Gastrocnemius medialis (tissue), 4 donors: ENCODE measurements at regions of chr3 and their contacts with region 1.

Region 1: GRCh38 chr3:58188173-58188564 is 22.6 kb downstream of the DNASE1L3 start:
- DNase-seq: no peak
- ATAC-seq: no peak
- H3K4me3 ChIP-seq: no peak overlapping the region
- H3K27ac ChIP-seq: peak overlapping the region in 3 of 4 donors; percentile 38 to 62 (median 60)
- H3K4me1 ChIP-seq: peaks cover 2 to 12% of the 10 kb centered on the region in 2 donors
- H3K27me3 ChIP-seq: no peaks in the 10 kb centered on the region
- CTCF ChIP-seq: no peak
- POLR2A ChIP-seq: no peak

Region 2: DNA sequence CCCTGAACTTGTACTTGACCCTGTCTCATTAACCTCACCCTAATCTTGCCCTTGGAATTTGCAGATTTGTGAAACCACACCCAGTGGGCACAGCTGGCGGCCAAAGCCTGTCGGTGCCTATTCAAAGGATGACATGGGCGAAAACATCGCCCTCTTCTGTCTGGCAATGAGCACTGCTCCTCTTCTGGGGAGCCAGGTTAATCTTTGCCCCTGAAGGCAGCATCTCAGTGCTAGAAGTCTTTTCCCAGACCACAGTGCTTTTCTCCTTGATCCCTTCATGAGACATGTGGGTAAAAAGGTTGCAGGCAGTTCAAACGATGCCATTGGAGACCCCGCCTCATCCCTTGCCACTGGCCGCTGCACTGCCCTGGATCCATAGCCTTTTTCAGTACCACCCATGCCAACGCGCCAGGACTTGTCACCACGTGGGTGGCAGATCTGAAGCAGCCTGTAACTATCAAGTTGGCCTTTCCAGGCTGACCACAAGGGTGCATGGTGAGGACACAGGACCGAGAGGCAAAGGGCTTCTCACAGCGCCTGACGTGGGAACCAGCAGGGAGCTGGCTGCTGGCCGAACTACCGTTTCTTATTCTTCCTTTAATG is 29.1 kb after region 1 on chr3:
- in situ Hi-C with region 1: no loop called
- intact Hi-C with region 1: loop called (anchors 2 kb)
- DNase-seq: peak; percentile 40 to 46
- ATAC-seq: peak; percentile 83 to 84
- H3K4me3 ChIP-seq: no peak overlapping the region
- H3K27ac ChIP-seq: peak overlapping the region in 3 of 4 donors; percentile 14 to 47 (median 30)
- H3K4me1 ChIP-seq: peaks cover 5 to 10% of the 10 kb centered on the region in 2 donors
- H3K27me3 ChIP-seq: no peaks in the 10 kb centered on the region
- CTCF ChIP-seq: peak; percentile 42 to 71 (median 63)
- POLR2A ChIP-seq: no peak

Region 3: DNA sequence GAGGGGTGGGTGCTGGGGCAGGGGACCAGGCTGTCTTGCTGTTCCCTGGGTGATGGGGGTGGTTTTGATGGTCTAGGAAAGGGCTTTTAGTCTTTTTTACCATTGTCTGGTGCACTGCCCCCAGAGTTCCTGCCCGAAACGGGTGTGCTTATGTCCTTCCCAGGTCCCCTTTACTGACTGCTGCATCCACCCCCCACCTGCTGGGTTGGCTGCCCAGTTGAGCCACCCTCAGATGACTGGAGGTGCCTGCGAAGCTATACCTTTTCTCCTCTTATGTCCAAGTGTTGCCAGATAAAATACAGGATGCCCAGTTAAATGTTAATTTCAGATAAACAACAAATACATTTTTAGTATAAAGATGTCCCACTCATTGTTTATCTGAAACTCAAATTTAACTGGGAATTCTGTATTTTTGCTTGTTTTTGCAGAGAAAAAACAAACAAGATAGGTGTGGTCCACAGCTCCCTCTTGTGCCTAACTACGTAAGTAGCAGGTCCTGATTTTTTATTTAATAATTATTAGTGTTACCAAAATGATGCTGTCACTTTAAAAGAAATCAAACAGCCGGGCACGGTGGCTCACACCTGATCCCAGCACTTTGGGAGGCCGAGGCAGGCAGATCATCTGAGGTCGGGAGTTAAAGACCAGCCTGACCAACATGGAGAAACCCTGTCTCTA is 111.8 kb after region 1 on chr3:
- in situ Hi-C with region 1: loop called (anchors 5 to 10 kb)
- intact Hi-C with region 1: loop called (anchors 2 kb)
- DNase-seq: no peak
- ATAC-seq: no peak
- H3K4me3 ChIP-seq: no peak overlapping the region
- H3K27ac ChIP-seq: no peak overlapping the region
- H3K4me1 ChIP-seq: peaks cover 0 to 14% of the 10 kb centered on the region in 2 donors
- H3K27me3 ChIP-seq: peaks cover 0 to 4% (median 0%) of the 10 kb centered on the region in 3 donors
- CTCF ChIP-seq: peak; percentile 30 to 59 (median 44)
- POLR2A ChIP-seq: no peak